MCF 10A (cell line): ENCODE measurements at regions of chr1 and their contacts with region 1.

Region 1: DNA sequence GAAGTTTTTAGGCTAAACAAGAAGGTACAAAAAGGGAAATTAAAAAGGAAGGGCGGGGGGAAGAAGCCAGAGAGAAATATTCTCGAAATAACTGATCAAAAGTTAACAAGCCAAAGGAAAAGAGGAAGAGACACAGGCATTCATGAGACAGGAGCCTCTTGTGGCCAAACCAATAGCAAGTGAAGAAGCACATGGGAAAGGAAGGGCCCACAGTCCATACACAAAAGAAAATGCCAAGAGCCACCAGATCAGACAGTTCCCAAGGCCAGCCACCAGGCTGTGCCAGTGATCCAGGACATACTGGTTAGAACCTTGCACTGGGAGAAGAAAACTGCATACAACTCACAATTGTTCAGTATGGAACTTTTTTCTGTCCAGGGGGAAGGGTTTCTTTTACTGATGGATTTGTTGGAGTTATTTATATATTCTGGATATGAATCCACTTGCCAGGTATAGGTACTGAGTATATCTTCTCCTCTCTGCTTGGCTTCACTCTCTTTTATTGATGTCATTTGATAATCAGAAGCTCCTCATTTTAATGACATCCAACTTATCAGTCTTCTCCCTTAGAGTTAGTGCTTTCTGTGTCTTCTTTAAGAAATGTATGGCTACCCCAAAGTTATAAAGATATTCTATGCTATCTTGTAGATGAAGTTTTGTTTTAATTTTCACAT is 76.8 kb downstream of the CD46 start:
- DNase-seq: peak; percentile 96
- H3K4me3 Mint-ChIP-seq: no peak overlapping the region
- H3K27ac Mint-ChIP-seq: peak overlapping the region; percentile 96
- H3K4me1 Mint-ChIP-seq: peaks cover 78% of the 10 kb centered on the region
- H3K27me3 Mint-ChIP-seq: no peaks in the 10 kb centered on the region
- CTCF ChIP-seq: peak; percentile 99

Region 2: GRCh38 chr1:207779008-207779407 is 49.6 kb before region 1 on chr1:
- CTCF ChIA-PET with region 1: no interaction called
- POLR2A ChIA-PET with region 1: no interaction called
- intact Hi-C with region 1: no loop called
- DNase-seq: no peak
- H3K4me3 Mint-ChIP-seq: no peak overlapping the region
- H3K27ac Mint-ChIP-seq: no peak overlapping the region
- H3K4me1 Mint-ChIP-seq: peaks cover 4% of the 10 kb centered on the region
- H3K27me3 Mint-ChIP-seq: no peaks in the 10 kb centered on the region
- CTCF ChIP-seq: no peak

Region 3: DNA sequence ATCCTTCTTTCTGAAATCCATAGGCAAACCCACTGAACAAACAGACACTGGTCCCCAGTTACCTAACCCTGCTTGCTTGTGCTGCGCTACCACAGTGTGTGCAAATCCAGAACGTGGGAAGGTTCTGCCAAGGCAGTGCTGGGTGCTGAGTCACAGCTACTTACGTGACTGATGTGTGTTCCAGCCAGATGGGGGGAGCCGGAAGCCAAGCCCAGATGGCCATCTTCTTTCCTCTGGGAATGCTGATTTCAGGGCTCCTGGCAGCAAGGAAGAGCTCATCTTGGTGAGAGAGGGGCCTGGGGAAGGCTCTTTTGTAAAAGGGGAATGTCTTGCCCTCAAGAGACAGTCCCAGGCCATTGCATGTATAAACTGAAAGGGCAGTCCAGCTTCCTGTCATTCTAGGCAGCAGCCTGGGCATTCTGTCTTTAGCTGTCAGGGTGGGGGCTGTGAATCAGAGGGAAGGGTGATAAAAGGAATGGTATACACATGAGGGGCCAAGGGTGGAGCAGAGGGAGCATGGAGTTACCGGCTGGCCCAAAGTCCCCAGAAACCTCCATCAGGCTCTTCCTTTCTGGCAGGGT is 22.7 kb before region 1 on chr1:
- CTCF ChIA-PET with region 1: interaction called, 68 read pairs
- POLR2A ChIA-PET with region 1: interaction called, 102 read pairs
- intact Hi-C with region 1: loop called (anchors 2 kb)
- DNase-seq: peak; percentile 100
- H3K4me3 Mint-ChIP-seq: peak overlapping the region; percentile 21
- H3K27ac Mint-ChIP-seq: peak overlapping the region; percentile 95
- H3K4me1 Mint-ChIP-seq: peaks cover 58% of the 10 kb centered on the region
- H3K27me3 Mint-ChIP-seq: no peaks in the 10 kb centered on the region
- CTCF ChIP-seq: no peak

Region 4: GRCh38 chr1:207848234-207848633 is 19.6 kb after region 1 on chr1:
- CTCF ChIA-PET with region 1: interaction called, 104 read pairs
- POLR2A ChIA-PET with region 1: interaction called, 42 read pairs
- intact Hi-C with region 1: no loop called
- DNase-seq: peak; percentile 94
- H3K4me3 Mint-ChIP-seq: peak overlapping the region; percentile 62
- H3K27ac Mint-ChIP-seq: peak overlapping the region; percentile 94
- H3K4me1 Mint-ChIP-seq: peaks cover 73% of the 10 kb centered on the region
- H3K27me3 Mint-ChIP-seq: no peaks in the 10 kb centered on the region
- CTCF ChIP-seq: no peak

Region 5: GRCh38 chr1:207897188-207897587 is 68.6 kb after region 1 on chr1:
- CTCF ChIA-PET with region 1: interaction called, 10 read pairs
- POLR2A ChIA-PET with region 1: interaction called, 5 read pairs
- intact Hi-C with region 1: no loop called
- DNase-seq: peak; percentile 32
- H3K4me3 Mint-ChIP-seq: no peak overlapping the region
- H3K27ac Mint-ChIP-seq: no peak overlapping the region
- H3K4me1 Mint-ChIP-seq: no peaks in the 10 kb centered on the region
- H3K27me3 Mint-ChIP-seq: no peaks in the 10 kb centered on the region
- CTCF ChIP-seq: peak; percentile 63